ENCODE measurements at regions of chr21 and their contacts with region 1.

Region 1: DNA sequence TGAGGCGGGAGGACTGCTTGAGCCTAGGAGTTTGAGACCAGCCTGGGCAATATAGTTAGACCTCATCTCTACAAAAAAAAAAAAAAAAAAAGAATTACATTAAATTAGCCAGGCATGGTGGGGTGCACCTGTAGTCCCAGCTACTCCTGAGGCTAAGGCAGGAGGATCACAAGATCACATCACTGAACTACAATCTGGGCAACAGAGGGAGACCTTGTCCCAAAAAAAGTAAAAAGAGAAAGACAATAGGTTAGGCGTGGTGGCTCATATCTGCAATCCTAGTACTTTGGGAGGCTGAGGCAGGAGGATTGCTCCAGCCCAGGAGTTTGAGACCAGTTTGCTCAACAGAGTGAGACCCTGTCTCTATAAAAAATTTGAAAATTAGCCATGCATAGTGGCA is 130.3 kb downstream of the TIAM1 start:
- DNase-seq: no peak
- ATAC-seq: no peak
- H3K4me3 Mint-ChIP-seq: no peak overlapping the region
- H3K27ac Mint-ChIP-seq: no peak overlapping the region
- H3K4me1 Mint-ChIP-seq: no peaks in the 10 kb centered on the region
- H3K27me3 Mint-ChIP-seq: no peaks in the 10 kb centered on the region
- CTCF ChIP-seq: no peak

Region 2: DNA sequence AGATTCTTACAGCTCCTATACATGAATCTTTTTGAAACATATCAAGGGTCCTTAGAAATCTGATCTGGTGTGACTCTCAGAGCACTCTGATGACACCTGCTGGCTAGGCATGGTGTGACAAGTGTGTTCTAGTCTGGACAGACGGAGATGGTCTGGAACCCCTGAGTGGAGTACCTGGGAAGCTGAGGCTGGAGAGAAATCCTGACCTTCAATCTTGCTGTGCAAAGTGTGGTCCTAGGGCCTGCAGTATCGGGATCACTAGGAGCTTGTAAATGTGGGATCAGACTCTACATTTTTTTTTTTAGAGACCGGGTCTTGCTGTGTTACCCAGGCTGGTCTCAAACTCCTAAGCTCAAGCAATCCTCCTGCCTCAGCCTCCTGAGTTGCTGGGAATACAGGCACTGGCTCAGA is 367.1 kb after region 1 on chr21:
- CTCF ChIA-PET with region 1: interaction called, 12 read pairs
- POLR2A ChIA-PET with region 1: no interaction called
- intact Hi-C with region 1: no loop called
- DNase-seq: peak; percentile 42
- ATAC-seq: peak; percentile 85
- H3K4me3 Mint-ChIP-seq: no peak overlapping the region
- H3K27ac Mint-ChIP-seq: no peak overlapping the region
- H3K4me1 Mint-ChIP-seq: no peaks in the 10 kb centered on the region
- H3K27me3 Mint-ChIP-seq: peaks cover 8% of the 10 kb centered on the region
- CTCF ChIP-seq: no peak

Measured in activated B cell treated with CpG ODN at 0.5 μM for 24 hours (primary cell).